ENCODE measurements at regions of chr16 and their contacts with region 1.

Region 1: GRCh38 chr16:88672776-88673175 is 9.9 kb upstream of the MVD start:
- DNase-seq: peak; percentile 45
- H3K4me3 ChIP-seq: no peak overlapping the region
- H3K27ac ChIP-seq: no peak overlapping the region
- H3K4me1 ChIP-seq: no peaks in the 10 kb centered on the region
- H3K27me3 ChIP-seq: no peaks in the 10 kb centered on the region
- CTCF ChIP-seq: peak; percentile 59

Region 2: DNA sequence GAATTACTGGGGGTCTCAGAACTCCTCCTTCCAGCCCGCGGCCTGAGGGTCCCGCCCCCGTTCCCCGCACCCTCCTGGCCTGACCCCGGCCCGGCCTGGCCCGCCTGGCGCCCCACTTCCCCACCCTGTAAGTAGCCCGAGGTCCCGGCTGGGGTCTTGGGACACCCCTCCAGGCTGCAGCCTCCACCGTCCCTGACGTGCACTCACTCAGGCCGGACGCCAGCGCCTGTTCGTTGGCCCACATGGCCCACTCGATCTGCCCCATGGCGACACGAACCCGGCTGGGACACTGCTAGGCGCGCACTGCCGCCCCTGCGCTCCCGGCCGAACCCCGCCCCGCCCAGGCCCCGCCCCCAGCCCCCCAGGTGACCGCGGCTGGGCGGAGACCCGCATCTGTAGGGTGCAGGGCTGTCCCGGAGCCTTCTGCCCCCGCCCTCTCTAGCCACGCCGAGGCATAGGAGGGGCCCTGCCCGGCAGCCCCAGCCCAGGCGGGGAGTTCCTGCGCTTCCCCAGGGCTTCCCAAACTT is 22.0 kb before region 1 on chr16 and contains the start of gene CYBA:
- CTCF ChIA-PET with region 1: no interaction called
- POLR2A ChIA-PET with region 1: no interaction called
- intact Hi-C with region 1: no loop called
- DNase-seq: peak; percentile 69
- H3K4me3 ChIP-seq: peak within 1 kb of the TSS; percentile 74
- H3K27ac ChIP-seq: peak within 1 kb of the TSS; percentile 70
- H3K4me1 ChIP-seq: peaks cover 17% of the 10 kb centered on the region
- H3K27me3 ChIP-seq: no peaks in the 10 kb centered on the region
- CTCF ChIP-seq: no peak
- total RNA-seq, gene CYBA: 44.7 and 53.6 TPM in 2 replicates

Region 3: GRCh38 chr16:88685156-88686061 is 12.6 kb after region 1 on chr16:
- CTCF ChIA-PET with region 1: interaction called, 11 read pairs
- POLR2A ChIA-PET with region 1: no interaction called
- intact Hi-C with region 1: no loop called
- DNase-seq: peak; percentile 52
- H3K4me3 ChIP-seq: peak overlapping the region; percentile 53
- H3K27ac ChIP-seq: no peak overlapping the region
- H3K4me1 ChIP-seq: peaks cover 6% of the 10 kb centered on the region
- H3K27me3 ChIP-seq: no peaks in the 10 kb centered on the region
- CTCF ChIP-seq: peak; percentile 65

Measured in A673 (cell line).